HAP-1 (cell line): ENCODE measurements at regions of chr13 and their contacts with region 1.

Region 1: DNA sequence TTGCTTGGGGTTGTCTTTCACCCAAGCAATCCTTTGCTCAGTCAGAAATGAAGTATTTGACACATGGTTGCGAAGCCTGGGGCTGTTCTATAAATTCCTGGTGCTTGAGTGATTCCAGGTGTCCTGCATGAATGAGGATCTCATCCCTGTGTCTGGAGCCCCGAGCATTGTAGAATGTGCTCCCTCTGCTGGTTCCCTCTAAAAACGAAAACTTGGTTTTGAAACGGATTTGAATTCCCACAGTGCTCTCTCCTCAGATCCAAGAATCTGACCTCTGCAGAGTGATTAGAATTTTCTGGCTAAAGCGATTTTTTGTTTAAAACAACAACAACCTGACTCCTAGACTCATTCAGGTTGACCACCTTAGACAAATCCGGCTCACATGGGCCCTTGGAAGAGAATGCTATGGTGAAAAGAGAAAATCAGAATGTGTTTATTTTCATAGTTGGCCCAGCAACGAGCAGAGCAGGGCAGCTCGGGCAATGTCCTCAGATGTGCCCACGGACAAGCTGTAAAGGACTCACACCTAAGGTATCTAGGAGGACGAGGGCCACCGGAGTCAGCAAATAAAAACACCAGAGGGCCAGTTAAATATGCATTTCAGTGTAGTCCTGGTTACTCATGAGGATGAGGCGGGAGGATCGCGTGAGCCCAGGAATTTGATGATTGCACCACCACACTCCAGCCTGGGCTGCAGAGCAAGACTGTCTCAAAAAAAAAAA is 8.7 kb upstream of the ATP12A start:
- DNase-seq: peak; percentile 69 to 76
- H3K4me3 ChIP-seq: no peak overlapping the region
- H3K4me1 ChIP-seq: peaks cover 3% of the 10 kb centered on the region
- H3K27me3 ChIP-seq: no peaks in the 10 kb centered on the region

Region 2: GRCh38 chr13:24574847-24575246 is 96.7 kb before region 1 on chr13:
- in situ Hi-C with region 1: loop called (anchors 10 kb)
- DNase-seq: no peak
- H3K4me3 ChIP-seq: no peak overlapping the region
- H3K4me1 ChIP-seq: no peaks in the 10 kb centered on the region
- H3K27me3 ChIP-seq: no peaks in the 10 kb centered on the region; the same call in 1 of the 2 replicates

Region 3: DNA sequence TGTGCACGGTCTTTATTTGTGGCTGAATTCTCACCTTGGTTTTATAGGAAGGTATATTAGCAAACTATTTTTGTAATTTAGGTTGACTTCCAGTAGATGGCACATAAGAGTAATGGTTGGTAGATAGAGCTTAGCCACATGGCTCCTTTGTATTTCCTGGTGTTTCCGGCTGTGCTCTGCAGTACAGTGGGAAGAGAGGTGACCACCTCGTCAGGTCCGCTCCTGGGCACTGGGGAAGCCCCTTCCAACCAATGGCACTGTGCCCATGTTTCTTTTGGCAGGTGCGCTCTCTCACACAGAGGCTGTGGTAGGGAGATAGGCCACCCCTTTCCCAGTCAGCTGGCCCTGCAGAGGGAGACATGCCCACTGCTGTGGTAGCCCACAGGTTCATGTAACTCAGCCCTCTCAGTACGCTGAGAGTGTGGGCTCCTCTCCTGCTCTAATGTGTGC is 65.6 kb before region 1 on chr13:
- in situ Hi-C with region 1: loop called (anchors 10 kb)
- DNase-seq: peak; percentile 35 to 67
- H3K4me3 ChIP-seq: no peak overlapping the region
- H3K4me1 ChIP-seq: no peaks in the 10 kb centered on the region
- H3K27me3 ChIP-seq: no peaks in the 10 kb centered on the region